Ovary (tissue), 10 donors: ENCODE measurements at regions of chr12 and their contacts with region 1.

Region 1: GRCh38 chr12:22544038-22544979 is at the start of gene C2CD5:
- DNase-seq: peak; percentile 97 to 98 (median 98)
- H3K4me3 ChIP-seq: peak within 1 kb of the TSS; percentile 95
- H3K27ac ChIP-seq: peak within 1 kb of the TSS; percentile 70 to 96
- H3K4me1 ChIP-seq: peaks cover 5% of the 10 kb centered on the region
- H3K27me3 ChIP-seq: no peaks in the 10 kb centered on the region
- CTCF ChIP-seq: no peak
- EP300 ChIP-seq: no peak
- POLR2A ChIP-seq: peak; percentile 73
- total RNA-seq, gene C2CD5: 28.3 to 41.3 (median 38.9) TPM

Region 2: DNA sequence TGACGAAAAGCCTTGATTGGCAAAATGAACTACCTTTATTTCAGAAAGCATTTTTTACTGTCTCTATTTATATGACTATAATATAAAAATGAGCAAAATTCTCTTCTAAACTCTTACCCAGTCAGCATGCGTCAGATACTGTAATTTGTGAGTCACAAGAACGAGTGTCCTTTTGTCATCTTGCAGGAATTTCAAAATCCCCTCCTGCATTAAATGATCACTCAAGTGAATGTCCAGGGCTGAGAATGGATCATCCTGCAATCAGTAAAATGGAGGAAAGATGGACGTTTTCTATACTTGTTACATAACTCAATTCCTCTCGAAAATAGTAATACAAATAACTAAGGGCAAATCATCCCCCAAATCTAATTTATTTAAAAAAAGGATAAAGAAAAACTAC is 692.1 kb before region 1 on chr12:
- intact Hi-C with region 1: no loop called
- DNase-seq: no peak
- H3K4me3 ChIP-seq: no peak overlapping the region
- H3K27ac ChIP-seq: no peak overlapping the region
- H3K4me1 ChIP-seq: no peaks in the 10 kb centered on the region
- H3K27me3 ChIP-seq: no peaks in the 10 kb centered on the region
- CTCF ChIP-seq: no peak
- EP300 ChIP-seq: no peak
- POLR2A ChIP-seq: no peak

Region 3: GRCh38 chr12:22610131-22610530 is 65.8 kb after region 1 on chr12:
- intact Hi-C with region 1: no loop called
- DNase-seq: no peak
- H3K4me3 ChIP-seq: no peak overlapping the region
- H3K27ac ChIP-seq: no peak overlapping the region
- H3K4me1 ChIP-seq: no peaks in the 10 kb centered on the region
- H3K27me3 ChIP-seq: no peaks in the 10 kb centered on the region
- CTCF ChIP-seq: no peak
- EP300 ChIP-seq: no peak
- POLR2A ChIP-seq: no peak

Region 4: DNA sequence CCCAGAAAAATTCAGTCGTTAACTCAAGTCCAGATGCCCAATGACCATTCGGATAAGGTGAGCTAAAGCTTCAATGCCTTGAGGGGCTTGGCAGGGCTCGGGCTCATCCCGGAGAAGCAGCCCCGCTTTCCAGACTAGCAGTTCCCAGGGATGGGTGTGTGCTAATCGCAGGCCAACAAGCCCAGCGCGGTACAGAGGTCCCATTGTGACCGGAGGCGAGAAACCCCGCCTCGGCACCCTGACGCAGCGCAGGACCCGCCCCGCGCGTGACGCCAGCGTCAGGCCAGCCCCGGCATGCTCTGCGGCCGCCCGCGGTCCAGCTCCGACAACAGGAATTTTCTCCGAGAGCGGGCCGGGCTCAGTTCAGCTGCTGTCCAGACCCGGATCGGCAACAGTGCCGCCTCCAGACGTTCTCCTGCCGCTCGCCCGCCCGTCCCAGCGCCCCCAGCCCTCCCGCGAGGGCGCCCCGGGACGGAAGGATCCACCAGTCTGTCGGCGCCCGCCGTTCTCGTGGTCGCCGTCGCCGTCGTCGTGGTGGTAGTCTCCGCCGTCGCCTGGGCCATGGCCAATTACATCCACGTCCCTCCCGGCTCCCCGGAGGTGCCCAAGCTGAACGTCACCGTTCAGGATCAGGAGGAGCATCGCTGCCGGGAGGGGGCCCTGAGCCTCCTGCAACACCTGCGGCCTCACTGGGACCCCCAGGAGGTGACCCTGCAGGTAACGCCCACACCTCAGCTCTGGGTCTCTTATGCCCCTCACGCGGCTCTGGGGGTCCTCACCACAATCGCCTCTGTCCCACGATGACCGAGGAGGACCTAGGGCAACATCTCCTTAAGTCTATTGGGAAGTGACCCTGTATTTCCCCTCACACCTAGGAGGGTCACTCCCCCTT is 80.8 kb after region 1 on chr12 and contains the start of gene ETNK1:
- intact Hi-C with region 1: loop called in 3 of 4 experiments (anchors 5 to 10 kb)
- DNase-seq: peak; percentile 94 to 96 (median 95)
- H3K4me3 ChIP-seq: peak within 1 kb of the TSS; percentile 95
- H3K27ac ChIP-seq: peak within 1 kb of the TSS; percentile 94 to 97
- H3K4me1 ChIP-seq: no peaks in the 10 kb centered on the region
- H3K27me3 ChIP-seq: no peaks in the 10 kb centered on the region
- CTCF ChIP-seq: peak in 1 of 3 donors; percentile 22
- EP300 ChIP-seq: no peak
- POLR2A ChIP-seq: peak; percentile 97
- total RNA-seq, gene ETNK1: 27.4 to 50.6 (median 42.0) TPM

Region 5: DNA sequence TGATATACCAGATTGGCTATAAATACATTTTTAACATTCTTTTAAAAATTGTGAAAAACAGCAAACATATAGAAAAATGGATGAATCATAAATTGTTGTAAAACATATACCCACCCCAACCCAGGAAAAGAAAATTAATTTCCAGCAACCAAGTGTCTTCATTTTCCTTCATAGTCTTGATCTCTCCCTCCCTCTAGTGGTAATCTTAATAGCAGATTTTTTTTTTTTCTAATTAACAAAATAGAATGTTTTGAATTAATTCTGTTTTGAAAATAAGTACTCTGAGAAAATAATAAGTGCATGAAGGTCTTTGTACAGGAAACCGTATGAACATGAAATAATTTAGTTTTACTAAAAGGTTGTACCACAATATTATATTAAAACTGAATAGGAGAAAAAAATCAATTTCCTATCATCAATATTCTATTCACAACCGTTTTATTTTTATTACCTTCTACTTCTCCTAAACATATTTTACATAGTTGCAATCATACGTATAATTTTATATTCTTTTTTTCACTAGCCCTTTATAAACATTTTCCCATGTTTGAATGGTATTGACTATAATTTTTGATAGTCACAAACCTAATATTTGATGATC is 87.7 kb after region 1 on chr12:
- intact Hi-C with region 1: loop called in 3 of 4 experiments (anchors 5 to 10 kb)
- DNase-seq: no peak
- H3K4me3 ChIP-seq: no peak overlapping the region
- H3K27ac ChIP-seq: no peak overlapping the region
- H3K4me1 ChIP-seq: peaks cover 6% of the 10 kb centered on the region
- H3K27me3 ChIP-seq: no peaks in the 10 kb centered on the region
- CTCF ChIP-seq: peak in 1 of 3 donors; percentile 24
- EP300 ChIP-seq: no peak
- POLR2A ChIP-seq: no peak

Region 6: GRCh38 chr12:22709292-22709691 is 165.0 kb after region 1 on chr12:
- intact Hi-C with region 1: no loop called
- DNase-seq: no peak
- H3K4me3 ChIP-seq: no peak overlapping the region
- H3K27ac ChIP-seq: no peak overlapping the region
- H3K4me1 ChIP-seq: no peaks in the 10 kb centered on the region
- H3K27me3 ChIP-seq: no peaks in the 10 kb centered on the region
- CTCF ChIP-seq: peak; percentile 42 to 46 (median 43)
- EP300 ChIP-seq: no peak
- POLR2A ChIP-seq: no peak

Region 7: DNA sequence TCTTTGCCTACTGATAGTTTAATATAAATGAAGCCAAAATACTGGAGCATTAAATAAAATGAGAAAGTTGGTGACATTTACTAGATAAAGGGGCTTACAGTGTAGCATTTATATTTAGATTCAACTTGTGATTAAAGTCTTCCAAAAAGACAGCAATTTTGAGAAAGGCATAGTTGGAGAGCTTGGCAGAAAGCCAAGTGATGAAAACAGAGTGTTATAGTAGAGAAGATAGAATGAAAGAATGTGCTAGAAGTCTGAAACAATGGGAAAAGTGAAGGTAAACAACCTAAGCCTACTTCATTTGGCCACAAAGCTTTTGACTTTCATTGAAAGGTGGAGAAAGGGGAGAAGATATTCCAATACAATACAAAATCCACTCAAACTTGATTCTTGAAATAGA is 496.4 kb after region 1 on chr12:
- intact Hi-C with region 1: no loop called
- DNase-seq: no peak
- H3K4me3 ChIP-seq: no peak overlapping the region
- H3K27ac ChIP-seq: no peak overlapping the region
- H3K4me1 ChIP-seq: no peaks in the 10 kb centered on the region
- H3K27me3 ChIP-seq: no peaks in the 10 kb centered on the region
- CTCF ChIP-seq: no peak
- EP300 ChIP-seq: no peak
- POLR2A ChIP-seq: no peak